Transverse colon (tissue), 4 donors: ENCODE measurements at regions of chr9 and their contacts with region 1.

Region 1: DNA sequence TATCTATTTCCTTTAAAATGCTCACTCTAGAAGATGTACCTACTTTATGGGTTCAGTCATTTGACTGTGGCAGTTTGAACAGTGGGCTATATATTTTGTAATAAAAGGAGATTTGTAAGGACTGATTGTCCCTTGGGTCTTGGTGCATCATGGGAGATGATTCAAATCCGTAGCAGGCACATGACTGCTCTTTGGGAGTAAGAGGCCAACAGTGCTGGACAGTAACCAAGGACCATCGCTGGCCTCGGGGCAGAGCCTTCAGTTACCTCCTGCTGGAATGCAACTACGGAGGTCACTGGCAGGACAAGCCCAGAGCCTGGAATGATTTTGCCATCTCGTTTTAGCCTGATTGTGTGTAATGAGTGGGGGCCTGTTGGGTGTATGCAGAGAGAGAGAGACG is 7.0 kb upstream of the MAMDC2 start:
- DNase-seq: no peak
- H3K4me3 ChIP-seq: no peak overlapping the region
- H3K27ac ChIP-seq: no peak overlapping the region
- H3K4me1 ChIP-seq: no peaks in the 10 kb centered on the region
- H3K27me3 ChIP-seq: no peaks in the 10 kb centered on the region
- CTCF ChIP-seq: no peak
- EP300 ChIP-seq: no peak
- POLR2A ChIP-seq: no peak

Region 2: DNA sequence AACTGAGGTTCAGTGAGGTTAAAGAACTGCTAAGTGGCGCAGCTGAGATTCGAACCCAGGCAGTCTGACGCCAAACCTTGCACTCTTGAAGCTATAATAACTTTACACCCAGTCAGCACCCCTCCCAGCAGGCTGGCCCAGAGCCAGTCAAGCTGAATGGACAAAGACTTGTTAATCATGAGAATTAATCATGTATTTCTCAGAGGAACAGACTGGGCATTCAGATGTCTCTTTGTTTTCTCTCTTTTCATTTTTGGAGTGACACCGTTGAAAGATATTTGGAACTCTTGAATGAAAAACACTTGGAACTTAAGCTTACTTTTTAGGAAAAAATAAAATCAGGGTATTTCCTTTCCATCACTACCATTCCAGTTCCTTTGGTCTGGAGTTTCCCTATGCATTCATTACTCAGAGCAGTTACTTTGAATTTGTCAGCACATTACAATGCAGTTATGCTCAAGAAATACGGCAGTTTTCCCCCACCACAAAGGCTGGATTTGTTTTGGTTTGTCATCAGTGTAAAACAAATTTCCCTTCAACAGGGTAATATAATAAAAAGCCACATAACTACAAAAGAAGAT is 15.6 kb before region 1 on chr9:
- in situ Hi-C with region 1: no loop called
- intact Hi-C with region 1: loop called (anchors 1 kb)
- DNase-seq: no peak
- H3K4me3 ChIP-seq: no peak overlapping the region
- H3K27ac ChIP-seq: no peak overlapping the region
- H3K4me1 ChIP-seq: no peaks in the 10 kb centered on the region
- H3K27me3 ChIP-seq: no peaks in the 10 kb centered on the region
- CTCF ChIP-seq: no peak
- EP300 ChIP-seq: no peak
- POLR2A ChIP-seq: no peak